Naive thymus-derived CD8-positive, alpha-beta T cell (primary cell): ENCODE measurements at regions of chr6 and their contacts with region 1.

Region 1: GRCh38 chr6:73515204-73515655 is 5.6 kb downstream of the EEF1A1 start:
- DNase-seq: no peak
- ATAC-seq: no peak
- H3K4me3 Mint-ChIP-seq: peak overlapping the region in 7 of 10 donors; percentile 35 to 65 (median 48)
- H3K27ac Mint-ChIP-seq: peak overlapping the region; percentile 66 to 92 (median 81)
- H3K4me1 Mint-ChIP-seq: peaks cover 18 to 58% (median 55%) of the 10 kb centered on the region in 4 donors
- H3K27me3 Mint-ChIP-seq: no peaks in the 10 kb centered on the region

Region 2: DNA sequence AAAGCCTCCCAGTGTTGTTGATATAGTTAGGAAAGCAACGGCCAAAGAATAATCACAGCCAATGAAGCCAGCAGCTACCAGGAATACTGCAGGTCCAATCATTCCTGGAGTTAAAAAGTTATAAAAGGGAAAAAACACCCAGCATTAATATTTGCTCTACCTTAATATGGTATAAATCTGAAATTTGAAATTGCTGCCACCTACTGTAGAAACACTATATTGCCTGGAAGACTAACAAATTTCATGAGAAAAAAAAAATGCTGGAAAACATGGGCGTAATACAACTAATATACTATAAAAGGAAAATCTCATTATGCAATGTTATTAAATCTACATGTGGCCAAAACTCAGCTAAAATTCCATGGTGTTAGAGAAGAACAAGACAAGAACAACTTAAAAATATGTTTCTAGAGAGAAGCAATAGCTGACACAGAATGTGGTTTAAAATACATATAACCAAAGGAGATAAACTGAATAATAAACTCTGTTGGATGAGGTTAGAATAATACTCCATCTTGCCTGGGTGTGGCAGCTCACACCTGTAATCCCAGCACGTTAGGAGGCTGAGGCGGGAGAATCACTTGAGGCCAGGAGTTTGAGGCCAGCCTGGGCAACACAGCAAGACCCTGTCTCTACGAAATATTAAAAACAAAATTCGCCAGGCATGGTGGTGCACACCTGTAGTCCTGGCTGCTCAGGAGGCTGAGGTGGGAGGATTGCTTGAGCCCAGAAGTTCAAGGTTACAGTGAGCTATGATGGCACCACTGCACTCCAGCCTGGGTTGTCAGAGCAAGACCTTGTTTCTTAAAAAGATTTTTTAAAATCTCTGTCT is 95.4 kb after region 1 on chr6:
- POLR2A ChIA-PET with region 1: interaction called, 62 read pairs
- DNase-seq: peak in 3 of 10 donors; percentile 62 to 66 (median 62)
- ATAC-seq: peak; percentile 47 to 67
- H3K4me3 Mint-ChIP-seq: no peak overlapping the region
- H3K27ac Mint-ChIP-seq: peak overlapping the region in 2 of 10 donors; percentile 5 to 53
- H3K4me1 Mint-ChIP-seq: peaks cover 0 to 7% (median 5%) of the 10 kb centered on the region in 4 donors
- H3K27me3 Mint-ChIP-seq: no peaks in the 10 kb centered on the region